Activated CD8-positive, alpha-beta memory T cell treated with anti-CD3 and anti-CD28 coated beads, Interleukin-2, amount 10 ng/mL, durations not matched to agents 7 days and 5 days (primary cell): ENCODE measurements at regions of chr17 and their contacts with region 1.

Region 1: GRCh38 chr17:76121932-76122430 is 18.4 kb upstream of the EXOC7 start:
- DNase-seq: no peak
- ATAC-seq: peak; percentile 8
- H3K4me3 Mint-ChIP-seq: no peak overlapping the region
- H3K27ac Mint-ChIP-seq: peak overlapping the region; percentile 77
- H3K4me1 Mint-ChIP-seq: peaks cover 14% of the 10 kb centered on the region
- H3K27me3 Mint-ChIP-seq: no peaks in the 10 kb centered on the region

Region 2: DNA sequence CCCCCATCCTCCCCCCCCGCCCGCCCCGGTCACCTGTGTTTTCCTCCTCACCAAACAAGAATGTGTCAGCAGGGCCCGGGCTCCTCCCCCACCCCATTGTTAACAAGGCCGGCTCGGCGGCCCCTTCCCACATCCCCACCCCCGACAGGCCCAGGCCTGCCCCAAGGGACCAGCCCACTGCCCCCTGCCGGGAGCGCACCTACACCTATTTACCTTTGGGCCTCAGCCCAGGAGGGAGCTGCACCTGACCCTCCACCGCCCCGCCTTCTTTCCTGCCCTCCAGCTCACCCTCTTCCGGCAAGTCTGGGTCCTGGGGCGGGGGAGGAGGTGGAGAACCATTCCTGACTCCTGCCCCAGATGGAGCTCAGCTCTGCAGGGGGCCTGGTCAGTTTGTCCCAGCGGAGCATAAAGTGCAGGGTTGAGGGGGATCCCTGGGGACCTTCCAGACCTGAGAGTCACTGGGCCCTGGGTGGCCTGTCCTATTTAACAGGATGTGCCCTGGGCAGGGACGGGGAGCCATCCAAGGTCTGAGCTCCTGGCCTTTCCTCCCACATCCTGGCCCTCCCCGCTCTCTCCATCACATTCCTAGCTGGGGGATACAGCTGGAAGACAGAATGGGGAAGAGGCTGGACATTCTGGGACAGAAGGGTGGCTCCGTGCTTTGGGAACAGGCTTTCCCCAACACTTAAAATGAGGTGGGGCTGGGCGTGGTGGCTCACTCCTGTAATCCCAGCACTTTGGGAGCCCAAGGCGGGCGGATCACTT is 10.8 kb after region 1 on chr17:
- CTCF ChIA-PET with region 1: interaction called, 38 read pairs
- DNase-seq: no peak
- ATAC-seq: no peak
- H3K4me3 Mint-ChIP-seq: no peak overlapping the region
- H3K27ac Mint-ChIP-seq: no peak overlapping the region
- H3K4me1 Mint-ChIP-seq: peaks cover 16% of the 10 kb centered on the region
- H3K27me3 Mint-ChIP-seq: no peaks in the 10 kb centered on the region

Region 3: DNA sequence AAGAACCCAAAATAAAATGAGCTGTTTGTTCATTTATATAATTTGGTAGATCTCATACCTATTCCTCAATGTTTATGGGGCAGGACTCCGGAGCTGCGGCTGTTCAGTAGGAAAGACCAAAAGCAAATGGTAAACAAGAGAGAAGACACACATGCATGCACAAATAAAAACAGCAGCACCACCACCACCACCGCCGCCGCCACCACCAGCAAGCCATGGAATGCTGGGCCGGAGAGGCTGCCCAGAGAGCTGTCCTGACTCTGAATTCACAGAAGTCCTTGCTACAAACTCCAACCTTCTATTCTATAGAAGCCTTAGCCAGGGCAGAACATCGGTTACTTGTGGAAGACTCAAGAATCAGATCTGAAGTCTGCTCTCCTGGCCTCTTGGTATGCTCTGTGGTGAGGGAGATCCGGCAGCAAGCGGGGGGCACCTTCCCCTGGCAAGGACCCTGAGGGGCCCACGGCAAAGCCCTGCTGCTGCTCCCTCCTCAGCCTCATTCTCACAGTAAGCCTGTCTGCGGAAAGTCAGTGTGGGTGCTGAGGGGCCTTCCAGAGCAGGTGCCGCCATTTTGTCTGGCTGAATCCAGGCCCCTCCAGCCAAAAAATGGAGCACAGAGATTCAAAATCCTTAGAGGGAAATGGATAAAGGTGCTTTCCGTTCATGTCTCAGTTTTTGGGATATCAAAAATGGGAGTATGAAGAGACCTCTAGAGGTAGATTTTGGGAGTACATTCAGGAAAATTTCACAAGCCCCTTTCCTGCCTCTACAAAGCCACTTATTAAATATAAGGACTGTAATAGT is 25.4 kb after region 1 on chr17:
- CTCF ChIA-PET with region 1: interaction called, 13 read pairs
- DNase-seq: no peak
- ATAC-seq: no peak
- H3K4me3 Mint-ChIP-seq: no peak overlapping the region
- H3K27ac Mint-ChIP-seq: peak overlapping the region; percentile 92
- H3K4me1 Mint-ChIP-seq: peaks cover 61% of the 10 kb centered on the region
- H3K27me3 Mint-ChIP-seq: no peaks in the 10 kb centered on the region

Region 4: DNA sequence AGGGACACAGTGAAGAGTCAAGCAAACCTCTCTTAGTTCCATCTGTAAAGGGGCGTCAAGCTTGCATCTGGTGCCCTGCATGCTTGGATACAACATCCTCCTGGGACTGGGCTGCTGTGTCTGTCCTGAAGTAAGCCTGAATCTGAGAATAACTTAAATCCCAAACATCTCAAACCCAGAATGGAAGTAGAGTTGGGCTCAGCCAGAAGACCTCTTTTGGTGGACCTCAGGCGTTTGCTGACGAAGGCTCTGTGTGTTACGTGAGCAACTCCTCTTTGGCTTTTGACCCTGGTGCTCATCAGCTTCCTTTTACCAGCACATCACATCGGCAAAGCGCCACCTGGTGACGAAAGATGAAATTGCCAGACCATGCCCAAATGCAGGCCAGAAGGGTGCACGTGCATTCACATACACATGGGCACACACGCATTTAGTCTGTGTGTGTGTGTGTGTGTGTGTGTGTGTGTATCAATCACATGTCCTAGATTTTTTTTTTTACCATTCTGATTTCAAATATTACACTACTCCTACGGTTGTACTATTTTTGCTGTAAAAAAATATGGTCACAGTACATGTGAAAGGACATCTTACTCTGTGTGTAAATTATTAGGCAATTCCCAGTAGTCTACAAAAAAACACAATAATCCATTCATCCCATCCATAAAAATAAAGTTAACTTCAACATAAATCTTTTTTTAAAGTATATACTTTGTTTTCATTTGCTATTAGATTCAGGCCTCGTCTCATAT is 60.2 kb after region 1 on chr17:
- CTCF ChIA-PET with region 1: interaction called, 147 read pairs
- DNase-seq: peak; percentile 98
- ATAC-seq: peak; percentile 87
- H3K4me3 Mint-ChIP-seq: no peak overlapping the region
- H3K27ac Mint-ChIP-seq: peak overlapping the region; percentile 94
- H3K4me1 Mint-ChIP-seq: peaks cover 59% of the 10 kb centered on the region
- H3K27me3 Mint-ChIP-seq: no peaks in the 10 kb centered on the region

Region 5: GRCh38 chr17:76271669-76272540 is 149.9 kb after region 1 on chr17:
- CTCF ChIA-PET with region 1: interaction called, 23 read pairs
- DNase-seq: peak; percentile 95
- ATAC-seq: peak; percentile 59
- H3K4me3 Mint-ChIP-seq: peak overlapping the region; percentile 92
- H3K27ac Mint-ChIP-seq: peak overlapping the region; percentile 99
- H3K4me1 Mint-ChIP-seq: peaks cover 51% of the 10 kb centered on the region
- H3K27me3 Mint-ChIP-seq: no peaks in the 10 kb centered on the region